Mammary epithelial cell (primary cell): ENCODE measurements at regions of chr6 and their contacts with region 1.

Region 1: DNA sequence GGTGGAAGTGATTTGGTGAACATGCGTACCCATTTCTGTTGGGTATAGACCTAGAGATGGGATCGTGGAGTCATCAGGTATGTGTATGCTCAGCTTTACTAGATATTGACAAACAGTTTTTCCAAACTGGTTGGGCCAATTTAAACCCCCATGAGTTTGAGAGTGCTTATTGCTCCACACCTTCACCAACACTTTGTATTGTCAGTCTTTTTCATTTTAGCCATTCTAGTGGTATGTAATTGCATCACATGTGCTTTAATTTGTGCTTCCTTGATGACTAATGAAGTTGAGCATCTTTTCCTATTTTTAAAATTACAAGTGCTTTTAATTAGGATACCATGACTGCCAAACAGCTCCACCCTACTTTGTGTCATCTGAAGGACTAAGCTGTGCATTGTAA is 158.9 kb upstream of the AKIRIN2 start:
- DNase-seq: no peak
- H3K4me3 ChIP-seq: no peak overlapping the region
- H3K27ac ChIP-seq: no peak overlapping the region
- H3K4me1 ChIP-seq: no peaks in the 10 kb centered on the region
- H3K27me3 ChIP-seq: peaks cover 9% of the 10 kb centered on the region
- CTCF ChIP-seq: no peak

Region 2: GRCh38 chr6:87897663-87898062 is 36.8 kb after region 1 on chr6:
- CTCF ChIA-PET with region 1: no interaction called
- dilution Hi-C with region 1: loop called (anchors 5 kb)
- in situ Hi-C with region 1: no loop called
- intact Hi-C with region 1: no loop called
- DNase-seq: no peak
- H3K4me3 ChIP-seq: no peak overlapping the region
- H3K27ac ChIP-seq: no peak overlapping the region
- H3K4me1 ChIP-seq: no peaks in the 10 kb centered on the region
- H3K27me3 ChIP-seq: peaks cover 14% of the 10 kb centered on the region
- CTCF ChIP-seq: no peak

Region 3: DNA sequence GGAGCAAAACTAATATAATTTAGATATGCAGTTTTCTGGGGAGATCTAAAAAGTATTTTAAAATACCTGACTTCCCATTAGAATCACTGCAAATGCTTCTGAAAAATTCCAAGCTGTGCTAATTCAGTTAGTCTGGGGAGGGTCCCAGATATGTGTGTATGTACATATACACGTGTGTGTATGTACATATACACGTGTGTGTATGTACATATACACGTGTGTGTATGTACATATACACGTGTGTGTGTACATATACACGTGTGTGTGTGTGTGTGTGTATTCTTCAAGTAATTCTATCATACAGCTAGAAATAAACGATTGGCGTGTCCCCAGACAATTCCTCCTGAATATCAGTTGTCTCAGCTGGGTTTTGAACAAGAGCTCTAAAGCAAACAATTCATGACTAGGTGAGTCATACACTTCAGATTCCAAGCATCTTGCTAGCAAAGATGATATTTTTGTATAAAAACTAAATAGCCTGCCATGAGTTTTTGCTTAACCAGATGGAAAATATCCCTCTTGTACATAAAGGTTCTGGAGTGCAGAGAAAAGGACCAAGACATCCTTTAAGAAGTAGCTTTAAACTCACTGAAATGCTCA is 244.9 kb after region 1 on chr6:
- CTCF ChIA-PET with region 1: no interaction called
- dilution Hi-C with region 1: no loop called
- in situ Hi-C with region 1: no loop called
- intact Hi-C with region 1: no loop called
- DNase-seq: no peak
- H3K4me3 ChIP-seq: no peak overlapping the region
- H3K27ac ChIP-seq: no peak overlapping the region
- H3K4me1 ChIP-seq: no peaks in the 10 kb centered on the region
- H3K27me3 ChIP-seq: no peaks in the 10 kb centered on the region
- CTCF ChIP-seq: no peak